Common myeloid progenitor, CD34-positive (primary cell): ENCODE measurements at regions of chr15 and their contacts with region 1.

Region 1: DNA sequence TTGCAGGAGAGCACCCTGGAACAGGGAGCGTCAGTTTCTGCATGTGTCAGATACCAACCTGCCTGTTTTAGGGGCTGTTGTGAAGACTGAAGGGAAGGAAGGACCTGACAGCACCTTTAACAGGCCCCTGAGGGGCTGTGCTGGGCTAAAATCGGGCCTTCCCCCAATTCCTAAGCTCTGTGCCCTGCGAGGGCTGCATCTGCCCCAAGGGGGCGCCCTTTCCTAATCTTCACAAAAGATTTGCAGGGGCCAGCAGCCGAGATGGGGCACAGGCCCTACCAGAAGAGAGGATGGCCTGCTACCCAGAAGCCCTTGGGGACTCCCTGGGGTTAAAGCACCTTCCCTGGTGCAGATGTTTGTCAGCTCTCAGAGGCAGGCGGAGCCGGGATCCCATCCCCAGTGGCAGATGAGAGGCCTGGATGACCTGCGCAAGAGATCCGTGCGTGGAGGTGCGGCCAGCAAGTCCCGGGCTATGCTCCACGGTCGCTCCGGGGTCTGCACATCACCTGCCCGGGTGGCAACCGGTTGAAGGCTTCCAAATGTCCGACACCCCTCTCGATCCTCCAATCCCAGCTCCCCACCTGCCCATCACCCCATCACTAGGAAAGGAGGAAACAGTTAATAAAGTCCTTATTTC is 53.6 kb downstream of the RHCG start:
- DNase-seq: peak; percentile 45 to 62 (median 55)
- H3K4me3 ChIP-seq: no peak overlapping the region
- H3K27ac ChIP-seq: no peak overlapping the region
- H3K4me1 ChIP-seq: no peaks in the 10 kb centered on the region
- H3K27me3 ChIP-seq: peaks cover 0 to 53% (median 14%) of the 10 kb centered on the region in 5 experiments

Region 2: GRCh38 chr15:89430530-89431341 is 12.1 kb before region 1 on chr15:
- CTCF ChIA-PET with region 1: interaction called, 12 read pairs
- POLR2A ChIA-PET with region 1: no interaction called
- DNase-seq: peak; percentile 61 to 84 (median 76)
- H3K4me3 ChIP-seq: peak overlapping the region; percentile 11 to 77 (median 59)
- H3K27ac ChIP-seq: no peak overlapping the region
- H3K4me1 ChIP-seq: peaks cover 0 to 7% (median 5%) of the 10 kb centered on the region in 4 experiments
- H3K27me3 ChIP-seq: peaks cover 3 to 46% (median 21%) of the 10 kb centered on the region in 5 experiments

Region 3: DNA sequence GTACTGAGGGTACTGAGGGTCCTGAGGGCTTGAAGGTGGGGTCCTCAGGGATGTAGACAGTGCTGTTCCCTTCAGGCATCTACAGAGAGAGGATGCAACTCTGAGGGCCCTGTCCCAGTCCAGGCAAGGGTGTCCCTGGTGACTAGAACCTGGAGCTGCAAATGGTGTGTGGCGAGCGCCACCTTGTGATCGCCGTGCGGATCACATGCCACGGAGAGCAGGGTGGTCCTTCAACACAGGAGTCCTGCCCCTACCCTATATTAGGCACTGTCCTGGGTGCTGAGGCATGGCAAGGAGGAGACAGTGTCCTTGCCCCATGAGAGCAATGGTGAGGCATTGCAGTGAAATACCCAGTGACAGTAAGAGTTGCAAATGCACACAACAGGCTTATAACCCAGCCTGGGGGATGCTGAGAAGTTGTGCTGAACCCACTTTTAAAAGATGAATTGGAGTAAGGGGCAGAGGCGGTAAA is 30.0 kb after region 1 on chr15:
- CTCF ChIA-PET with region 1: interaction called, 27 read pairs
- POLR2A ChIA-PET with region 1: no interaction called
- DNase-seq: peak; percentile 73 to 80 (median 73)
- H3K4me3 ChIP-seq: no peak overlapping the region
- H3K27ac ChIP-seq: no peak overlapping the region
- H3K4me1 ChIP-seq: peaks cover 0 to 2% (median 0%) of the 10 kb centered on the region in 4 experiments
- H3K27me3 ChIP-seq: peaks cover 0 to 61% (median 14%) of the 10 kb centered on the region in 5 experiments